Mammary epithelial cell (primary cell): ENCODE measurements at regions of chr7 and their contacts with region 1.

Region 1: DNA sequence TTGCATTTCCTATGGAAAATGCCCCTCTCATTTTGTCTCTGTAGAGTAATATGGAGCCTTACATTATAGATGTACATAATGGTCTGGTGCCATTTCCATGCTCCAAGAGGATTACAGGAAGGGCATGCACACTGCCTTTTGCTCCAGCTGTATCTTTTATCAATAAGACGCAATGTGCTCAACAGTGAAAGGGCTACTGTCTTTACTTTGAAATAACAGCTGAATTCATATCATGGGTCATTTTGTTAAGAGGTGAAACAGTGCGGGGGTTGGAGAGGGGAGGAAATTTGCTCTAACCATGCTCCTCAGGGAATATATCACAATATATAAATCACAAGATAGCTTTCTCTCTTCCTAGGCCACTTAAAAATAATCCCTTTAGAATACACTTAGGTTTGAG is 77.7 kb downstream of the ICA1 start:
- DNase-seq: no peak
- H3K4me3 ChIP-seq: no peak overlapping the region
- H3K27ac ChIP-seq: no peak overlapping the region
- H3K4me1 ChIP-seq: no peaks in the 10 kb centered on the region
- H3K27me3 ChIP-seq: no peaks in the 10 kb centered on the region
- CTCF ChIP-seq: no peak

Region 2: GRCh38 chr7:8135417-8135816 is 48.8 kb before region 1 on chr7:
- CTCF ChIA-PET with region 1: no interaction called
- dilution Hi-C with region 1: no loop called
- in situ Hi-C with region 1: no loop called
- intact Hi-C with region 1: loop called (anchors 5 kb)
- DNase-seq: no peak
- H3K4me3 ChIP-seq: no peak overlapping the region
- H3K27ac ChIP-seq: no peak overlapping the region
- H3K4me1 ChIP-seq: no peaks in the 10 kb centered on the region
- H3K27me3 ChIP-seq: no peaks in the 10 kb centered on the region
- CTCF ChIP-seq: no peak